IMR-90 (cell line): ENCODE measurements at regions of chr2 and their contacts with region 1.

Region 1: GRCh38 chr2:198127627-198128026 is 323.2 kb downstream of the PLCL1 start:
- DNase-seq: peak; percentile 71
- ATAC-seq: peak; percentile 85
- H3K4me3 ChIP-seq: no peak overlapping the region
- H3K27ac ChIP-seq: no peak overlapping the region
- H3K4me1 ChIP-seq: no peaks in the 10 kb centered on the region
- H3K27me3 ChIP-seq: no peaks in the 10 kb centered on the region
- CTCF ChIP-seq: peak; percentile 64
- POLR2A ChIP-seq: no peak
- RAD21 ChIP-seq: peak; percentile 73

Region 2: DNA sequence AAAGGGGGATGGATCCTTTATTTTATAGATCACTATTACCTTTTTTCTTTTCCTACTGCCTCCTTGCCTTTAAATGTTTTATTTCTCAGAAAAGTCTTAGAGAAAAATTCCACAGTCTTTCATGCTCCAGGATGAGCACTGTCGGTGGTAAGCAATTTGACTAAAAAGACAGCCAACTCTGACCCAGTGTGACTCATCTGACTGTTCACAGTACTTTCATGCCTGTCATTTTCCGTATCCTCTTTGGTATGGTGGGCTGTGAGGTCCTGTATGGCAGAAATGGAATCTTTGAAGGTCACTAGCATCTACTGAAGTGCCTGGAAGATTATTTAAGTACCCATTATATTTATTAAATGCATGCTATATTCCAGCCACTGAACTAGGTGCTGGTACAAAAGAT is 450.1 kb before region 1 on chr2:
- CTCF ChIA-PET with region 1: no interaction called
- POLR2A ChIA-PET with region 1: no interaction called
- dilution Hi-C with region 1: no loop called
- in situ Hi-C with region 1: no loop called
- intact Hi-C with region 1: no loop called
- DNase-seq: peak; percentile 53
- ATAC-seq: no peak
- H3K4me3 ChIP-seq: no peak overlapping the region
- H3K27ac ChIP-seq: no peak overlapping the region
- H3K4me1 ChIP-seq: peaks cover 2% of the 10 kb centered on the region; the same call in 1 of the 2 replicates
- H3K27me3 ChIP-seq: no peaks in the 10 kb centered on the region
- CTCF ChIP-seq: no peak
- POLR2A ChIP-seq: no peak
- RAD21 ChIP-seq: no peak

Region 3: DNA sequence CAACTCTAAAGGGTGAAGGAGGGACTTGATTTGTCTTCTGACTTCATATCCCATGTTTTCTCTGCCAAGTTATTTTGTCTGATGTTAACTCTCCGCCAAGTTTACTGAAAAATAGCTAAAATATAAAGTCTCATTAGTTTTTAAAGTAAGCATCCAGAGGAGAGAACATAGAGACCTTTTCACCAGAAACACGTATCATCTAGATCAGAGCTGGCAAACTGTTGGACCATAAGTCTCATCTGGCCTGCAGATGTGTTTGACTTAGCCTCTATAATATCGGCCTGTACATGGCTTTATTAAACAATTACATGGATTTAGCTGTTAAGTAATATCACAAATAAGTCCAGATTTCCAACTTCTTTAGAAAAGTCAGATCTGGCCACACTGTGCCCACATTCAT is 140.7 kb before region 1 on chr2:
- CTCF ChIA-PET with region 1: interaction called, 3 read pairs
- POLR2A ChIA-PET with region 1: no interaction called
- dilution Hi-C with region 1: no loop called
- in situ Hi-C with region 1: no loop called
- intact Hi-C with region 1: loop called (anchors 5 kb)
- DNase-seq: no peak
- ATAC-seq: no peak
- H3K4me3 ChIP-seq: no peak overlapping the region
- H3K27ac ChIP-seq: no peak overlapping the region
- H3K4me1 ChIP-seq: no peaks in the 10 kb centered on the region
- H3K27me3 ChIP-seq: no peaks in the 10 kb centered on the region
- CTCF ChIP-seq: no peak
- POLR2A ChIP-seq: no peak
- RAD21 ChIP-seq: no peak

Region 4: GRCh38 chr2:198296665-198297308 is 169.2 kb after region 1 on chr2:
- CTCF ChIA-PET with region 1: interaction called, 4 read pairs
- POLR2A ChIA-PET with region 1: no interaction called
- dilution Hi-C with region 1: no loop called
- in situ Hi-C with region 1: no loop called
- intact Hi-C with region 1: loop called (anchors 1 kb)
- DNase-seq: peak; percentile 40
- ATAC-seq: peak; percentile 92
- H3K4me3 ChIP-seq: no peak overlapping the region
- H3K27ac ChIP-seq: no peak overlapping the region
- H3K4me1 ChIP-seq: no peaks in the 10 kb centered on the region
- H3K27me3 ChIP-seq: peaks cover 1% of the 10 kb centered on the region; the same call in 1 of the 2 replicates
- CTCF ChIP-seq: peak; percentile 63
- POLR2A ChIP-seq: no peak
- RAD21 ChIP-seq: peak; percentile 67